ENCODE measurements at regions of chrX and their contacts with region 1.

Region 1: DNA sequence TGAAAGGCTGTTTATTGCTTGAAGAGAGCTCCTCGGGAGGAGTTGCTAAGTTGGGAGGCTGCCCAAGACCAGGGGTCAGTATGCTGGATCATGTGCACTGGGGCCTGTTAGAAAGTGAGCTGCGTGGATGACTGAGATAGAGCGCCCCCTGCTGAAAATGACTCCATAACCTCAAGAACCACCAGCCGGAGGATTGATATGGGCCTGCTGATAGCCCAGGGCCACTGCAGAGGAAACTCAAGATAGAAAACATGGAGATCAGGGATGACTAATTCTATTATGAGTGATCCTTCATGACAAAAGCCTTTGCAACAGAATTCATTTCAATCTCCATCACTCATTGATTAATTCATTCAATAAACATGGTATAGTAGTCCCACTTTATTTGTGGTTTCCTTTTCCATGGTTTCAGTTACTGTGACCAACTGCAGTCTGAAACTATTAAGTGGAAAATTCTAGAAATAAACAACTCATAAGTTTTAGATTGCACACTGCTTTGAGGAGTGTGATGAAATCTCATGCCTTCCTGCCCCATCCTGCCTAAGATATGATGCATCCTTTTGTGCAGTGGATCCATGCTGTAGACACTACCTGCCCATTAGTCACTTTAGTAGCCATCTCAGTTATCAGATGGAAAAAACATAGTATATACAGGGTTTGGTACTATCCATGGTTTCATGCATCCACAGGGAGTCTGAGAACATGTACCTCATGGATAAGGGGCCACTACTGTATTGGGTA is 126.7 kb upstream of the MBNL3 start:
- DNase-seq: peak; percentile 47 to 72 (median 60)
- H3K4me3 ChIP-seq: no peak overlapping the region
- H3K27ac ChIP-seq: no peak overlapping the region
- H3K4me1 ChIP-seq: no peaks in the 10 kb centered on the region
- H3K27me3 ChIP-seq: peaks cover 0 to 4% (median 0%) of the 10 kb centered on the region in 5 experiments

Region 2: DNA sequence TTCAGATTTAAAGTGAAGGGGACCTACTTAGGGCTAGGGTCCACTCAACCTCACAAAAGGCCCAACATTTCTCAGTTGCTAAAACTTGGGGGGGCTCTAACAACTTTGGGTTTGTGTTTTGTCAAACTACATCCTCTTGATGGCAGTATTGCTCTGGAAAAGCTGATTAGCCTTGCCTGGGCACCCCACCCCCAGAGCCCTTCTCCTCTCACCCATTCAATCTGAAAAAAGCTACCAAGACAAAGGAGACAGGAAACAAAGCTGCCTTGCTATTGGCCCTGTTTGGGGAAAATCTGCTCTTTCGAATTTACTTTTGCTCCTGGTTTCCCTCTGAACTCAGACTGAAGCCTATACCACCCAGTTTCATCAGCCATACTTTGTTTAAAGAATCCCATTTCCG is 787.6 kb before region 1 on chrX:
- CTCF ChIA-PET with region 1: interaction called, 10 read pairs
- POLR2A ChIA-PET with region 1: no interaction called
- DNase-seq: peak; percentile 63 to 80 (median 79)
- H3K4me3 ChIP-seq: peak overlapping the region in 6 of 7 experiments; percentile 47 to 83 (median 71)
- H3K27ac ChIP-seq: peak overlapping the region in 1 of 2 experiments; percentile 62
- H3K4me1 ChIP-seq: peaks cover 9 to 36% (median 13%) of the 10 kb centered on the region in 4 experiments
- H3K27me3 ChIP-seq: peaks cover 0 to 5% (median 0%) of the 10 kb centered on the region in 5 experiments

Region 3: GRCh38 chrX:132292793-132293192 is 322.8 kb before region 1 on chrX:
- CTCF ChIA-PET with region 1: interaction called, 20 read pairs
- POLR2A ChIA-PET with region 1: no interaction called
- DNase-seq: peak; percentile 46 to 76 (median 72)
- H3K4me3 ChIP-seq: peak overlapping the region in 1 of 7 experiments; percentile 28
- H3K27ac ChIP-seq: no peak overlapping the region
- H3K4me1 ChIP-seq: peaks cover 0 to 2% (median 0%) of the 10 kb centered on the region in 4 experiments
- H3K27me3 ChIP-seq: no peaks in the 10 kb centered on the region

Region 4: GRCh38 chrX:132602701-132603100 is 12.9 kb before region 1 on chrX:
- CTCF ChIA-PET with region 1: interaction called, 23 read pairs
- POLR2A ChIA-PET with region 1: no interaction called
- DNase-seq: no peak
- H3K4me3 ChIP-seq: no peak overlapping the region
- H3K27ac ChIP-seq: no peak overlapping the region
- H3K4me1 ChIP-seq: no peaks in the 10 kb centered on the region
- H3K27me3 ChIP-seq: peaks cover 0 to 23% (median 0%) of the 10 kb centered on the region in 5 experiments

Region 5: DNA sequence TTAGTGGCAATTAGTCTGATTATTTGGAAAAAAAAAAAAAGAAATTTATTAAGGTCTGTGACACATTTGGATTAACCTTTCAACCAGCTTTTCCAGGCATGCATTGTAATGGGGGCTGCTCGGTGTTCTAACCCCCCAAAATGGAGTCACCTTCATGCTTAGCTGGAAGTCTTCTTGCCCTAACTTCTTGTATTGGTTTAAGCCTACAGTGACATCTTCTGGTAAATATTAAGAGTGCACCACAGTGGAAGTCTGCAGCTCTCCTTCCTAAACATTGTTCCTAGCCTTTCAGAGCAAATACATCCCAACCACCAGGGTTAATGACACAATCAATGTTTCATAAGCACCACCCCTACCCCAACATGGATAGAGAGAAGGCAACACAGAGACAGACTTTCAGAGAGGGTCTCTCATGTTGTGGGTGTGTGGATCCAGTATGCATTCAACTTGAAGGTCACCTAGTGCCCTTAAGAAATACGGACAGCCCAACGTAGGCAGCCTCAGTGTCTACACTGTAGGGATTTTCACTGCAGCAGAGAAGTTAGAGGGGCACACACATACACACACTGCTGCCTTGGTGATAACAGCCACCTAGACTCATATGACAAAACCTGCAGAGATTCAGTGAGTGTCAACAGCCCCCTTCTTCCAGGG is 16.1 kb after region 1 on chrX:
- CTCF ChIA-PET with region 1: interaction called, 15 read pairs
- POLR2A ChIA-PET with region 1: no interaction called
- DNase-seq: peak; percentile 40 to 65 (median 63)
- H3K4me3 ChIP-seq: no peak overlapping the region
- H3K27ac ChIP-seq: no peak overlapping the region
- H3K4me1 ChIP-seq: no peaks in the 10 kb centered on the region
- H3K27me3 ChIP-seq: peaks cover 0 to 19% (median 0%) of the 10 kb centered on the region in 5 experiments

Measured in common myeloid progenitor, CD34-positive (primary cell).